Activated CD8-positive, alpha-beta T cell treated with anti-CD3 and anti-CD28 coated beads, Interleukin-2, amount 10 ng/mL, durations not matched to agents 7 days and 5 days (primary cell): ENCODE measurements at regions of chr19 and their contacts with region 1.

Region 1: DNA sequence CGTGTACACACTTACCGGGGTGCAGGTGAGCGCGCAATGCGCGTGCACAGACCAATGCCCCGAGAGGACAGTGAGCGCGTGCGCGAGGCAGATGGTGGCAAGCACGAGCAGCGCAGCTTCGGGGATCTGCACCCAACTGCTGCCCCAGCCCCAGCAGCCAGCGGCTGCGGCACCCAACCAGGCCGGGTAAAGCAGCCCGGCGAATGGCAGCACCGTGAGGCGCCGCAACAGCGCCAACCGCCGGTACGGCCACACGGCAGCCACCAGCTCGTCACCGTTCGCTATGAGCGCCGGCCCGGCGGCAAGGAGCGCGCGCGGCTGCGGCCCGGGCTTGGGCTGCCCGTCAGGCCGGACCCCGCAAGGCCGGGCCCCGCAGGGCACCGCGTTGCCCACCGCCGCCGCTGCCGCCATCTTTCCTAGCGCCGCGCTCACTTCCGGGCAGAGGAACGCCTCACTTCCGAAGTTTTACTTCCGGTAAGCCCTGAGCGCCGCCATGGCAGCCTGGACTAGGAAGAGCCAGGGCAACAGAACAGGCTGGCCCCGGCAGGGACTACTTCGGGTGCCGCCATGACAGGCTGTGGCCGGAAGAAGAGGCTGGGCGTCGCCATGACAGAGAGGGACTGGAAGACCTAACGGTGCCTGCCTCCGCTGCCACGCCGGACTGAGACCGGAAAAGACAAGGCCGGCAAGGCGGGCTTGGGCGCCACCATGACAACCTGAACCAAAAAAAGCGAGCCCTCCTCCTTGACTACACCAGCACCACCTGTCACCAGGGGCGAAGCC is at the start of gene ATP13A1:
- DNase-seq: peak; percentile 96
- ATAC-seq: peak; percentile 84
- H3K4me3 Mint-ChIP-seq: peak within 1 kb of the TSS; percentile 93
- H3K27ac Mint-ChIP-seq: peak within 1 kb of the TSS; percentile 98
- H3K4me1 Mint-ChIP-seq: peaks cover 33% of the 10 kb centered on the region
- H3K27me3 Mint-ChIP-seq: no peaks in the 10 kb centered on the region
- total RNA-seq, gene ATP13A1: 78.6 to 78.8 TPM

Region 2: GRCh38 chr19:19643158-19644053 is 20.0 kb before region 1 on chr19 and contains the start of gene GMIP:
- CTCF ChIA-PET with region 1: interaction called, 12 read pairs
- POLR2A ChIA-PET with region 1: interaction called, 5 read pairs
- DNase-seq: peak; percentile 92
- ATAC-seq: peak; percentile 91
- H3K4me3 Mint-ChIP-seq: peak within 1 kb of the TSS; percentile 98
- H3K27ac Mint-ChIP-seq: peak within 1 kb of the TSS; percentile 94
- H3K4me1 Mint-ChIP-seq: peaks cover 21% of the 10 kb centered on the region
- H3K27me3 Mint-ChIP-seq: no peaks in the 10 kb centered on the region
- total RNA-seq, gene GMIP: 96.7 to 104 TPM

Region 3: DNA sequence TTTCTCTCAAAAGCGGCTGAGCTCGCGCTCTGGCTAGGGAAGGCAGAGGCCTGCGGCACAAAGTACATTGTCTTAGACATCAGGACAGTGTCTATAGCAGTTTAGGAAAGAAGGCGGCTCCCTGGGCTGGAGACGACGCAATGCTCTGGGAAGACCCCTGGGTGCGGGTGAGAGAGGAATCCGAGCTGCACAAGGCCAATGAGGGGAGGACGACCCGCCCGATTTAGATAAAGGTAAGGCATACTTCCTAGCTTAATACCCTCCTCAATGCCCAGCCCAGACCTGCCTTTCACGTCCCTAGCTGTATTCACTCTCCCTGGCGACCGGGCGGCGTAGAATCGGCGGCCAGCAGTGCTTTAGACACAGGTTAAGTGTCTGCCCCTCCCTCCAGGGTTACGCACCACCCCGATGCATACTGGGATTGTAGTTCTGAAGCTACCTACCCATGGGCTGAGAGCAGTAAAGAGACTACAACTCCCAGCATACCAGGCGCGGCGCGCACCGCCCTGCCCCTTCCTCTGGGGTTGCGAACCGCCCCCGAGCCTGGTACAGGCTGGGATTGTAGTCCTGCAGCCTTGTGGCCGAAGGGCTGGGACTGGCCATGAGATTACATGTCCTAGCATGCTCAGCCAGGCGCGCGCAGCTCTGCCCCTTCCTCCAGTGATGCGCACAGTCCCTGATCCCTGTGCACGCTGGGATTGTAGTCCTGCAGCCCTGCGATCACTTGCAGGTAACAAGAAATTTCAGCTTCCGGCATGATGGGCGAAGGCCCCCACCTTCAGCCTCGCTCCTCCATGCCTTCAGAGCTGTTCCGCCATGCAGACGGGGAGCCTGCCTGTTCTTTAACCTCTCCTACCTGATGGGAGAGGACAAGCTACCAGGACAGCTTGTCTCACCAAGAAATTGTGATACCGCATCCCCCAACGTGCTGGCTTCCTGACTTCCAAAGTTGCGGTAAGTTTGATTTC is 112.9 kb after region 1 on chr19:
- CTCF ChIA-PET with region 1: interaction called, 3 read pairs
- POLR2A ChIA-PET with region 1: interaction called, 10 read pairs
- DNase-seq: peak; percentile 96
- ATAC-seq: peak; percentile 99
- H3K4me3 Mint-ChIP-seq: peak overlapping the region; percentile 93
- H3K27ac Mint-ChIP-seq: peak overlapping the region; percentile 94
- H3K4me1 Mint-ChIP-seq: peaks cover 48% of the 10 kb centered on the region
- H3K27me3 Mint-ChIP-seq: no peaks in the 10 kb centered on the region

Region 4: GRCh38 chr19:19865739-19866481 is 202.5 kb after region 1 on chr19 and contains the start of gene ZNF253:
- CTCF ChIA-PET with region 1: no interaction called
- POLR2A ChIA-PET with region 1: interaction called, 22 read pairs
- DNase-seq: peak; percentile 99
- ATAC-seq: peak; percentile 96
- H3K4me3 Mint-ChIP-seq: peak within 1 kb of the TSS; percentile 100
- H3K27ac Mint-ChIP-seq: peak within 1 kb of the TSS; percentile 100
- H3K4me1 Mint-ChIP-seq: peaks cover 32% of the 10 kb centered on the region
- H3K27me3 Mint-ChIP-seq: no peaks in the 10 kb centered on the region
- total RNA-seq, gene ZNF253: 15.7 to 17.5 TPM

Region 5: DNA sequence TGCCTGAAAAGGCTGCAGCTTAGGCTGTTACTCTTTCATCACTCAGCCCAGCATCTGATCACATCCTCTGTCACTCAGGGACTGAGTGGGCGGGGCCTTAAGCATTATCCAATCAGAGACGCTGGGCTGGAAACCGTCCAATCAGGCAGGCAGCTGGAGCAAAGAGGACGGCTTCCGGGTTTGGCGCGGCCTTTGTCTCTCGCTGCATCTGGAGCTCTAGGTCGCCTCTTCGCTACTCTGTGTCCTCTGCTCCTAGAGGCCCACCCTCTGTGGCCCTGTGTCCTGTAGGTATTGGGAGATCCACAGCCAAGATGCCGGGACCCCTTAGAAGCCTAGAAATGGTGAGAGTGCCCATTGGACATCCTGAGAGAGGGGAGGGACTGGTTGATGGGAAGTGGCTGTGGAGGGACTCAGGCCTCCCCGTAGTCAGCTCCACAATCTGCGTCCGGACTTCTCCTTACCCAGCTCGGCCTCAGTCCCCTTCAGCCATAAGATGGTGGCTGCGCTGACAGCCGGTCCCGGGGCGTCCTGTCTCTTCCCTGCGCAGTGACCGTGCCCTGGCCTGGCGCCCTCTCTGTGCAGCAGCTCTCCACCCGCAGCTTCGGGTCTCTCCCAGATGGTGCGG is 503.7 kb after region 1 on chr19 and contains the start of gene ZNF486:
- CTCF ChIA-PET with region 1: no interaction called
- POLR2A ChIA-PET with region 1: interaction called, 11 read pairs
- DNase-seq: peak; percentile 96
- ATAC-seq: peak; percentile 97
- H3K4me3 Mint-ChIP-seq: peak within 1 kb of the TSS; percentile 98
- H3K27ac Mint-ChIP-seq: peak within 1 kb of the TSS; percentile 98
- H3K4me1 Mint-ChIP-seq: peaks cover 40% of the 10 kb centered on the region
- H3K27me3 Mint-ChIP-seq: no peaks in the 10 kb centered on the region
- total RNA-seq, gene ZNF486: 13.1 to 13.9 TPM